CD8-positive, alpha-beta memory T cell (primary cell): ENCODE measurements at regions of chr1 and their contacts with region 1.

Region 1: DNA sequence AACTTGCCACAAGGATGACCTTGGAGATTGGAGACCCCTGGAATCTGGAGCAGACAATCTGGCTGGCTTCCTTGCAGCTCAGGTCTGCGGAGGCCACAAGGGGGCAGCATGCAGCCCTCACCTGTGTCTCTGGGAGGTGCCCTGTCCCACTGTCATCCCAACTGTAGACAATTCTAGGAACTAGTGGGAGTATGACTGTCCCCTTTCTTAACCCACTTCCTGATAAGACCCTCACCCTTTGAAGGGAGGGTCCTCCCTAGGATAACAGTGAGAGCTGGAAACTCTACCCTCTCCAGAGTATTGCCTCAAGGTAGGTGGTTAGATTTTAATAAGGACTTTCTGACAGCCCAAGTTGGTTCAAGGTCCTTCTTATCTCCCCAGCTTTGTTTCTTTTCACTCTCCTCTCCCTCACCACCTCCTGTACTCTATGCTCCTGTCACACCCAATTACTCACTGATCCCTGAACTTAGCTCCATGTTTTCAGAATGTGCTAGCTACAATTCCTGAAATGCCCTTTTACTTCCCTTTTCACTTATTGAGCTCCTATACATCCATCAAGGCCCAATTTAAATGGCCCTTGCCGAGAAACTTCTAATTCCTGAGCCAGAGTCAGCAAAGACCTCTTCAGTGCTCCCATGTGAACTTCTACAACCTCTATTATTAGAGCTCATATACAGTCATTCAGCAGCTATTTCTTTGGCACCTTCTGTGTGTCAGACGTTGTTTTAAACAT is 9.2 kb upstream of the KCNQ4 start:
- DNase-seq: peak; percentile 43 to 74 (median 56)
- H3K4me3 ChIP-seq: no peak overlapping the region
- H3K4me3 Mint-ChIP-seq: no peak overlapping the region
- H3K27ac ChIP-seq: no peak overlapping the region
- H3K27ac Mint-ChIP-seq: peak overlapping the region in 1 of 8 donors; percentile 38
- H3K4me1 ChIP-seq: no peaks in the 10 kb centered on the region
- H3K4me1 Mint-ChIP-seq: peaks cover 0 to 6% (median 3%) of the 10 kb centered on the region in 3 donors
- H3K27me3 ChIP-seq: no peaks in the 10 kb centered on the region
- H3K27me3 Mint-ChIP-seq: no peaks in the 10 kb centered on the region

Region 2: DNA sequence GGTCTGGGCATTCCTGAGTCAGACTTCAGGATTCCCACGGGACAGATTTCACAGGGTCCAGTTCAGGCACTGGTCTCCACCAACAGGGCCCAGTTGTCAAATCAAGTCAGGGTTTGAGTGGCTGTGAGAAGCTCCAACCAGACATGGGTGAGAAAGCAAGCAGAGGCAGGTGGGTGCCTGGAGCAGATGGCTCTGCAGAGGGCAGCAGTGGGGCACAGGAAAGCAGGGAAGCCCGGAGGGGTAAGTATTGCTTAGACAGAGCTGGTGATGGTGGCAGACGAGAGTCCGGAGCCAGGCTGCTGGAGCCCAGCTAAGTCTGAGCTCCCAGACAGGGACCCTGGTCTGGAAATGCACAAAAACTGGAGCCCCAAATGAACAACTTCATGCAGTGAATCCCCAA is 149.4 kb before region 1 on chr1:
- CTCF ChIA-PET with region 1: no interaction called
- POLR2A ChIA-PET with region 1: no interaction called
- DNase-seq: peak in 1 of 5 donors; percentile 41
- H3K4me3 ChIP-seq: no peak overlapping the region
- H3K4me3 Mint-ChIP-seq: no peak overlapping the region
- H3K27ac ChIP-seq: no peak overlapping the region
- H3K27ac Mint-ChIP-seq: no peak overlapping the region
- H3K4me1 ChIP-seq: peaks cover 14% of the 10 kb centered on the region
- H3K4me1 Mint-ChIP-seq: peaks cover 23 to 24% (median 23%) of the 10 kb centered on the region in 3 donors
- H3K27me3 ChIP-seq: no peaks in the 10 kb centered on the region
- H3K27me3 Mint-ChIP-seq: peaks cover 0 to 3% of the 10 kb centered on the region in 2 donors

Region 3: GRCh38 chr1:40691538-40692428 is 82.6 kb before region 1 on chr1 and contains the start of gene NFYC:
- CTCF ChIA-PET with region 1: interaction called, 10 read pairs
- POLR2A ChIA-PET with region 1: no interaction called
- DNase-seq: peak; percentile 89 to 97 (median 94)
- H3K4me3 ChIP-seq: peak within 1 kb of the TSS; percentile 94
- H3K4me3 Mint-ChIP-seq: peak within 1 kb of the TSS; percentile 90 to 100 (median 93)
- H3K27ac ChIP-seq: peak within 1 kb of the TSS; percentile 97
- H3K27ac Mint-ChIP-seq: peak within 1 kb of the TSS; percentile 92 to 100 (median 97)
- H3K4me1 ChIP-seq: peaks cover 41% of the 10 kb centered on the region
- H3K4me1 Mint-ChIP-seq: peaks cover 59 to 74% (median 71%) of the 10 kb centered on the region in 3 donors
- H3K27me3 ChIP-seq: no peaks in the 10 kb centered on the region
- H3K27me3 Mint-ChIP-seq: peaks cover 0 to 5% of the 10 kb centered on the region in 2 donors
- total RNA-seq, gene NFYC: 61.3 to 61.6 TPM

Region 4: DNA sequence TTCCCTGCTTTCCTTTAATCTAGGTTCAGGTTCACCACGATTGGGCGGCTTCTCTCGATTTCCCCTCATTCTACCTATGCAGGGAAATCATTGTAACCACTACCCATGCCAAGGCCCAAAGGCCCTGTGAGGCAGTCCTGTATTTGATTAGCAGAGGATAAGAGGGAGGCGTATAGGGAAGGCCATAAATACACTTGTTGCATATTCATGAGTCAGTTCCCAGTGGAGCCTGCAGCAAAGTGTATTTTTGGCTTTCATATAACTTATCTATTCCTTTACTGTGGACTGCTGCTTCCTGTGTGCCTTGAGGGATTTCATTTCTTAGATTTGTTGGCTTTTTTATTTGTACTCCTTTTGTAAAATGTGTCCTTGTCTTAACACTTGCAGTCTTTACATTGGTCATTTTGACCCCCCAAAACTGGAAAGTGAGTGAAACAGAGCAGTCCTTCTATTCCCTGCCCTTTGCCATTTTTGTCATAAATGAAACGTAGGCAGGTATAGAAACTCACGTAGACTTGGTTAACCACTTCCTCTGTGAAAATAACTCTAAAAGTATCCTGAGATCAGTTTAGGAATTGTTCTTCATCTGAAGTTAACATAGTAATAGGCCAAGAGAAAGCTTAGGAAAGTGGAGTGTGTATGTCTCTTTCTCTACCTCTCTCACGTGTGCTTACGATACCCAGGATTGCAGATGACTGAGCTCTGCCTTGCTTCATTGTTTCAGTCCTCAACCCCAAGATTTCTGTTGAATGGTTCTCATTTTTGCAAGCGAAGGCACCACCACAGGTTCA is 10.5 kb before region 1 on chr1:
- CTCF ChIA-PET with region 1: interaction called, 10 read pairs
- POLR2A ChIA-PET with region 1: no interaction called
- DNase-seq: peak in 1 of 5 donors; percentile 35
- H3K4me3 ChIP-seq: no peak overlapping the region
- H3K4me3 Mint-ChIP-seq: peak overlapping the region in 3 of 7 donors; percentile 24 to 56 (median 24)
- H3K27ac ChIP-seq: no peak overlapping the region
- H3K27ac Mint-ChIP-seq: peak overlapping the region; percentile 68 to 92 (median 84)
- H3K4me1 ChIP-seq: peaks cover 27% of the 10 kb centered on the region
- H3K4me1 Mint-ChIP-seq: peaks cover 18 to 37% (median 32%) of the 10 kb centered on the region in 3 donors
- H3K27me3 ChIP-seq: no peaks in the 10 kb centered on the region
- H3K27me3 Mint-ChIP-seq: no peaks in the 10 kb centered on the region

Region 5: DNA sequence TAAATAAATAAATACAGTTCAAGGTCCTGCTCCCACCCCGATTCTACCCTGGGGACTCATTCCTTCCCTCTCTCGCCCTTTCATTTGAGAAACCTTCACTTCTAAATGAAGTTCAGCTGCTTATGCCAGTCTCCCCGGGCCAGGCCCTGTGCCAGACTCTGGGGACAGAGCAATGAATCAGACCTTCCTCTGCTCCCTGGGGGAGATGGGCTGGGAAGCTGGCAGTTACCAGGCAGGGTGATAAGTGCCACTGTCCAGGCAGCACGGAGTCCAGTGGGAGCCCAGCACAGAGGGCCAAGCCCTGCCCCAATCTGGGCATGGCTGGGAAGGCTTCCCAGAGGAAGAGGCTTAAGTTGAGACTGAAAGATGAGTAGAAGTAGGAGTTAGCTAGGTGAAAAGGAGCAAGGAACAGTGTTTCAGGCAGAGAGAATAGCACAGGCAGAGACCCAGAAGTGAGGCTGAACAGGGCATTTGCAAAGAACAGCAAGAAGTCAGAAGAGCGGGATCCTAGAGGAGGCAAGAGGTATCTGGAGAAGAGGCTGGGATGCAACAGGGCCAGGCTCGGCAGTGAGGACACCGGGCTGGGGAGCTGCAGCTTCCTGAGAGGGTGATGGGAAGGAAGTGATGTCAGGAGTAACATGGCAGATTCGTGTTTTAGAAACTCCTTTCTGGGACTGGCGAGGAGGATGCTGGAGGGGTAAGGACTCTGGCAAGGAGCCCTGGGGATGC is 22.7 kb after region 1 on chr1:
- CTCF ChIA-PET with region 1: interaction called, 17 read pairs
- POLR2A ChIA-PET with region 1: no interaction called
- DNase-seq: no peak
- H3K4me3 ChIP-seq: no peak overlapping the region
- H3K4me3 Mint-ChIP-seq: peak overlapping the region in 3 of 7 donors; percentile 5 to 59 (median 46)
- H3K27ac ChIP-seq: no peak overlapping the region
- H3K27ac Mint-ChIP-seq: peak overlapping the region in 5 of 8 donors; percentile 6 to 73 (median 48)
- H3K4me1 ChIP-seq: peaks cover 44% of the 10 kb centered on the region
- H3K4me1 Mint-ChIP-seq: peaks cover 27 to 47% (median 35%) of the 10 kb centered on the region in 3 donors
- H3K27me3 ChIP-seq: no peaks in the 10 kb centered on the region
- H3K27me3 Mint-ChIP-seq: peaks cover 0 to 1% of the 10 kb centered on the region in 2 donors

Region 6: DNA sequence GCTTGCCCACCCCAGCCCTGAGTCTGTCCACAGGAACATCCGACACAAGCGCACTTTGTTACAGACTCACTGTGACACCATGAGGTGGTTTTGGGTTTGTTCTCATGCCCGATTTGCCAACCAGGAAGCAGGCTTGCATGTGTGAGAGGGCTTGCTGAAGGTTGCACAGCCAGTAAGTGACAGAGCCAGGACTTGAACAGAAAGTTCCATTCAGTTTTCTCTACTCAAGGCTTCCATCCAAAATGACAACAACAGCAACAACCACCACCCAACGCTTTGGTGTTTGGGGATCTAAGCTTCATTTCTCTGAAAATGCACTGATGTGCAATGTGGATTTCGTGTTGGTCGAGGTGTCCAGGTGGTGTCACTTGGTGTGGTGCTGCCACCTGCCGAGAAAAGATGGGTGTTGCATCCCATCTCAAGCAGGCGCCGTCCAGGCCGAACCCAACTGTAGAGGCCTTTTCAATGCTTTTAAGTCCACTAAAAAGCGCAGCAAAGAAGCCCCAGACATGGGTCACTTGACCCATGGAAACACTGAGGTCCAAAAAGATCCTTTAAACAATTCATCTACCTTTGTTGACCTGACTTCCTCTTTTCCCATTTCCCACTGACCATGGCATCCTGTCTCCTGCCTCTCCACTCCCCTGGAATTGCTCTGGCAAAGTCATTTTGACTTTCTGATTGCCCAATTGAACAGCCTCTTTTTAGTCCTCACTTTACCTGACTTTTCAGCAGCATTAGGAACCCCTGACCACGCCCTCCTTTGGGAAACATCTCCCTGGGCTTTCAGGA is 75.6 kb after region 1 on chr1:
- CTCF ChIA-PET with region 1: interaction called, 40 read pairs
- POLR2A ChIA-PET with region 1: interaction called, 6 read pairs
- DNase-seq: peak; percentile 63 to 81 (median 68)
- H3K4me3 ChIP-seq: no peak overlapping the region
- H3K4me3 Mint-ChIP-seq: peak overlapping the region in 6 of 7 donors; percentile 6 to 62 (median 52)
- H3K27ac ChIP-seq: no peak overlapping the region
- H3K27ac Mint-ChIP-seq: peak overlapping the region in 5 of 8 donors; percentile 13 to 61 (median 47)
- H3K4me1 ChIP-seq: peaks cover 11% of the 10 kb centered on the region
- H3K4me1 Mint-ChIP-seq: peaks cover 10 to 19% (median 18%) of the 10 kb centered on the region in 3 donors
- H3K27me3 ChIP-seq: no peaks in the 10 kb centered on the region
- H3K27me3 Mint-ChIP-seq: peaks cover 0 to 2% of the 10 kb centered on the region in 2 donors

Region 7: DNA sequence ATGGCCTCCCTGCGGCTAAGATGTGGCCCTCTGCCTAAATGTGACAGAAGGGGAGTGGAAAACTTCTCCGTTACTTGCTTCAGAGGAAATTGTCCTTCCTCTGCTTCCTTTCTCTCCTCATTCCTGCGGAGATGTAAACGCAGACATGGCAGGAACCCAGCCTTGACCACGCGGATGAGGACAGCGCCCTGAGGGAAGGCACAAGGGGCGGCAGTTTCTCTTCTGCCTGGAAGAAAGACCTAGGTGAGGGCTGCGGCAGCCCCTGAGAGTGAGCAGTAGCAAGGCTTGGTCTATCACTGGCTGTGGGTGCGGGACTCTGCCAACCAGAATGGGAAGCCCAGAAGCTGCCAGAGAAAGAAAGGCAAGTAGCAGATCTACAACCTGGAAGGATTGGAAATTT is 191.1 kb after region 1 on chr1:
- CTCF ChIA-PET with region 1: no interaction called
- POLR2A ChIA-PET with region 1: no interaction called
- DNase-seq: no peak
- H3K4me3 ChIP-seq: no peak overlapping the region
- H3K4me3 Mint-ChIP-seq: no peak overlapping the region
- H3K27ac ChIP-seq: no peak overlapping the region
- H3K27ac Mint-ChIP-seq: no peak overlapping the region
- H3K4me1 ChIP-seq: no peaks in the 10 kb centered on the region
- H3K4me1 Mint-ChIP-seq: no peaks in the 10 kb centered on the region
- H3K27me3 ChIP-seq: no peaks in the 10 kb centered on the region
- H3K27me3 Mint-ChIP-seq: peaks cover 2 to 4% of the 10 kb centered on the region in 2 donors

Region 8: DNA sequence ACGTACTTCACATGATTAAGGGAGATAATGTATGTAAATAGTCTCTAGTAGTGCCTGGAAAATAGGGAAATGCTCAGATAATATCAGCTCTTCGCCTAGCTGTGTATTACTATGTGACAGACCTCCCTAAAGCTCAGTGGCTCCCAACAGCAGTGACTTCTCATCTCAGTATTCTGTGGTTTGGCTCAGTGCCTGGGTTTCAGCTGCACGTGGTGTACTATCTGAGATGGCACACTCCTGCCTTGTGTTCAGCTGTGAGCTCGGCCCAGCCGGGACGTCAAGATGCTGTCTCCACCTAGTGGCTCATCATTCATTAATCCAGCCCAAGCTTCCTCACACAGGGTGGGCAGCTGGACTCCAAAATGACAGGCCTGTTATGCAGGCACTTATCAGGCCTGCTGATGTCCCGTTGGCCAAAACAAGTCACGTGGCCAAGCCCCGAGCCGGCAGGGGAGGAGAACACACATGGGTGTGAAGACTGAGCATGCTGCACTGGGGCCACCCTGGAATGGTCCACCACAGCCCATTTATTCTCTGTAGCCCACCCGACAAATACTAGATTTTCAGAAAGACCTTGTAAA is 229.3 kb after region 1 on chr1:
- CTCF ChIA-PET with region 1: interaction called, 11 read pairs
- POLR2A ChIA-PET with region 1: no interaction called
- DNase-seq: peak; percentile 69 to 93 (median 81)
- H3K4me3 ChIP-seq: no peak overlapping the region
- H3K4me3 Mint-ChIP-seq: peak overlapping the region in 1 of 7 donors; percentile 1
- H3K27ac ChIP-seq: no peak overlapping the region
- H3K27ac Mint-ChIP-seq: peak overlapping the region; percentile 2 to 94 (median 55)
- H3K4me1 ChIP-seq: peaks cover 17% of the 10 kb centered on the region
- H3K4me1 Mint-ChIP-seq: peaks cover 13 to 26% (median 18%) of the 10 kb centered on the region in 3 donors
- H3K27me3 ChIP-seq: no peaks in the 10 kb centered on the region
- H3K27me3 Mint-ChIP-seq: no peaks in the 10 kb centered on the region